ENCODE measurements at regions of chr11 and their contacts with region 1.

Region 1: DNA sequence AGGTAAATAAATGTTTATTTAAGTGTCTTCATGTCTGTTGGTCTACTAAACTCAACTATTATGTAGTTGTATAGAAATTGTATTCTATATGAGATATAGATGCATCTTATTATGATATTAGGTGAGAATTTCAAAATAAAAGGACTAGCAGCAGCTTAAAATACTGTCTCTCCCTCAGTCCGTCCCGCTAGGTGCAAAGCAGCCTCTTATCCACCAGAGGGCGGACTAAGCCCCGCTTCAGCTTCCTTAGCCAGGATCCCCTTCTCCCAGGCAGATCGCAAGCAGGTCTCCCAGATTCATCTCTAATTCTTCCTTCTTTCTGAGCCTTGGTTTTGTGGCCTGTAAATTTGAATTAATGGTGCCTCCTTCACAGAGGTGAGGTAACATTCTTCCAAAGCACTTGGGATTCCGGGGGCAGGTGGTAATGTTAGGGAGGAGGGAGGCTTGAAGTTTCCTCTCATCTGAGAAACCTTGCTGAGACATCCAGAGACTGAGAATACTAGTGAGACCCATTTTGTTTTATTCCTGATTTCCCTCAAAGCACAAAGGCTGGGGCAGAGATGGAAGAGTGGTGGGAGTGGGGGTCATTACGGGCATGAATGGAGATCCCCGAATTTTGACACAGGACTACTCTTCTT is 13.5 kb upstream of the INSC start:
- DNase-seq: peak; percentile 64
- H3K4me3 ChIP-seq: no peak overlapping the region
- H3K27ac ChIP-seq: no peak overlapping the region
- H3K4me1 ChIP-seq: no peaks in the 10 kb centered on the region
- CTCF ChIP-seq: peak; percentile 96

Region 2: DNA sequence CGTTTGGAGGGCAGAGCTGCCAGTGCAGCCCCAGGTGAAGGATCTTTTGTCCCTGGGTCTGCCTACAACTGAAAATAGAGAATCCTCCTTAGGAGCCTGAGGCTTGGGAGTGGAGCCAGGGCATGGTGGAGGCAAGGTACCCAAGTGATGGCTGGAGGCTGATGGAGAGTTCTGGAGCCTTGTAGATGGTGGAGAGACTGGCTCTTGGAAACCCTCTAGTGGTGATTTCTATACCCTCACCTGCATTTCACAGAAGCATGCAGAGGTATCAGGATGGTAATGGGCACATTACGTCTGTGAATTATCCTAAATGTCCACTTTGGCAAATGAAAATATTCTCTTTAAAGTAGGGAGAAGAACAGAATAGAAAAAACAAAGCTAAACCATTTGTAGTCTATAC is 57.9 kb after region 1 on chr11:
- CTCF ChIA-PET with region 1: no interaction called
- POLR2A ChIA-PET with region 1: interaction called, 3 read pairs
- intact Hi-C with region 1: loop called (anchors 1 kb)
- DNase-seq: peak; percentile 34
- H3K4me3 ChIP-seq: no peak overlapping the region
- H3K27ac ChIP-seq: no peak overlapping the region
- H3K4me1 ChIP-seq: no peaks in the 10 kb centered on the region
- CTCF ChIP-seq: peak; percentile 85

Region 3: DNA sequence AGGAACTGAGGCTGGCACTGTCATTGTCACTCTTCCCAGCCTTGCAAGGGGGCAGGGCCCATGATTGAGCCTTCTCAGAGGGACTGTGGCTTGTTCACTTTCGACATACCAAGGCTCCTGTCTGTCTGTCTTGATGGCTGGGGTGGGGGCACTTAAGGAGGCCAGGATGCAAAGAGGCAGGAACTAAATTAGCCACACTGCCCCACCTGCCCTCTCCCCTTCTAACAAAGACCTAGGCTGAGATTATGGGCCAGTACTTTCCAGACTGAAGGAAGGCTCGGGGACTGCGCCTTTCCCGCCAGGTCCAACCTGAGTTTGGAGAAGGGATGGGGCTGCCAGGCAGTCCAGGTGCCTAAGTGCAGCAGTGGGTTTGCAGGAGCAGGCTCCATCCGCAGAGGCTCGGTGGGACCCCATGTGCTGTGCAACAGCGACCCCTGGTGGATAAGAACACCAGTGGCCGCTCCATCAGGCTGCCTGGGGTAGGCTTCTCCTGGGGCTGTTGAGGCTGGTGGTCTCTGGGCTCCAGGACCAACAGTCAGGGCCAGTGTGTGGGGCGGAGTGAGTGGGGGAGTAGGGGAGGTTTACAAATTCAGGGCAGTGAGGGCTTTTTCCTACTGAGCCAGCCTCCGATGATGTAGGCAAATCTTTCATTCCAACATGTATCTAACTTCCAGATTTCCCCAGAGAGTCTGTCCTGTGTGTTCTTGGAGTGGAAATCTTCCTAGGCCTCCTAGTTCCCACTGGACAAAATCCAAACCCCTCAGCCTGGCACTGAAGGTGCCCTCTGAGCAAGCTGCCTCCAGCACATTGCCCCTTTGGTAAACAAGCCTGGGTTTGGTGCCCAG is 107.4 kb after region 1 on chr11:
- CTCF ChIA-PET with region 1: interaction called, 6 read pairs
- POLR2A ChIA-PET with region 1: interaction called, 6 read pairs
- intact Hi-C with region 1: loop called (anchors 1 kb)
- DNase-seq: peak; percentile 74
- H3K4me3 ChIP-seq: no peak overlapping the region
- H3K27ac ChIP-seq: no peak overlapping the region
- H3K4me1 ChIP-seq: no peaks in the 10 kb centered on the region
- CTCF ChIP-seq: peak; percentile 87

Region 4: DNA sequence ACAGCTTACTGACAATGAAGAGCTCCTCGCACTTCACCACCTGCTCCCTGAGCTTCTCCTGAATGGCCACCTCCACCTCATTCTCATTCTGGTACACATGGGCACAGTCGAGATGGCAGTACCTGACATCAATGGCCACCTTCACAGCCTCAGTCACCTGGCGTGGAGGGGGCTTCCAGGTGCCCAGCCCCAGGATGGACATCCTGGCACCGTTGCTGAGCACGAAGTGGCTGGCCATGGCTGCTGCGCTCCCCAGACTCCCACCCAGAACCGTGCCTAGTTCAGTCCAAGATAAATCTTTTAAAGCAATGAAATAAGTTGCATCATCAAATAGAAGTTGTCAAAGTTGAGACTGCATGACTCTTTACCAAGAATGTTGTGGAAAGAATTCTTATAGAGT is 1383.2 kb after region 1 on chr11:
- CTCF ChIA-PET with region 1: no interaction called
- POLR2A ChIA-PET with region 1: no interaction called
- intact Hi-C with region 1: no loop called
- DNase-seq: no peak
- H3K4me3 ChIP-seq: no peak overlapping the region
- H3K27ac ChIP-seq: no peak overlapping the region
- H3K4me1 ChIP-seq: no peaks in the 10 kb centered on the region
- CTCF ChIP-seq: no peak